ENCODE measurements at regions of chr15 and their contacts with region 1.

Region 1: GRCh38 chr15:75453703-75454470 is 2.4 kb upstream of the SIN3A start:
- DNase-seq: peak; percentile 97 to 99
- ATAC-seq: peak; percentile 43 to 67 (median 51)
- H3K4me3 ChIP-seq: peak overlapping the region; percentile 92
- H3K4me3 Mint-ChIP-seq: peak overlapping the region; percentile 98
- H3K27ac ChIP-seq: peak overlapping the region; percentile 96
- H3K27ac Mint-ChIP-seq: peak overlapping the region; percentile 98 to 99
- H3K4me1 ChIP-seq: peaks cover 38% of the 10 kb centered on the region
- H3K4me1 Mint-ChIP-seq: peaks cover 45 to 49% of the 10 kb centered on the region in 2 donors
- H3K27me3 ChIP-seq: no peaks in the 10 kb centered on the region
- H3K27me3 Mint-ChIP-seq: no peaks in the 10 kb centered on the region
- CTCF ChIP-seq: no peak

Region 2: GRCh38 chr15:74615508-74616365 is 838.1 kb before region 1 on chr15 and contains the start of gene CLK3:
- intact Hi-C with region 1: loop called (anchors 10 kb)
- DNase-seq: peak; percentile 97 to 98
- ATAC-seq: peak; percentile 76 to 88 (median 78)
- H3K4me3 ChIP-seq: peak within 1 kb of the TSS; percentile 89
- H3K4me3 Mint-ChIP-seq: peak within 1 kb of the TSS; percentile 94
- H3K27ac ChIP-seq: peak within 1 kb of the TSS; percentile 97
- H3K27ac Mint-ChIP-seq: peak within 1 kb of the TSS; percentile 94
- H3K4me1 ChIP-seq: peaks cover 46% of the 10 kb centered on the region
- H3K4me1 Mint-ChIP-seq: peaks cover 34 to 55% of the 10 kb centered on the region in 2 donors
- H3K27me3 ChIP-seq: no peaks in the 10 kb centered on the region
- H3K27me3 Mint-ChIP-seq: no peaks in the 10 kb centered on the region
- CTCF ChIP-seq: no peak
- total RNA-seq, gene CLK3: 288 to 298 (median 293) TPM

Region 3: DNA sequence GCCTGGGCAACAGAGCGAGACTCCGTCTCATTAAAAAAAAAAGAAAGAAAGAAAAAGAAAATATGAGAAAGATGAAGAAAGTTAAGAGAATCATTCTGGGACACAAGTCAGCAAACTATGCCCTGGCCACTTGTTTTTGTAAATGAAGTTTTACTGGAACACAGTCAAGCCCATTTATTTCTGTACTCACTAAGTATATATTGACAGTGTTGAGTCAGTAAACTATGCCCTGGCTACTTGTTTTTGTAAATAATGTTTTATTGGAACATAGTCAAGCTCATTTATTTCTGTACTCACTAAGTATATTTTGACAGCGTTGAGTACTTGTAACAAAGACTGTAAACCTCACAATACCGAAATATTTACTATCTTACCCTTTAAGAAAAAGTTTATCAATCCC is 39.8 kb after region 1 on chr15:
- intact Hi-C with region 1: no loop called
- DNase-seq: no peak
- ATAC-seq: no peak
- H3K4me3 ChIP-seq: no peak overlapping the region
- H3K4me3 Mint-ChIP-seq: no peak overlapping the region
- H3K27ac ChIP-seq: no peak overlapping the region
- H3K27ac Mint-ChIP-seq: no peak overlapping the region
- H3K4me1 ChIP-seq: no peaks in the 10 kb centered on the region
- H3K4me1 Mint-ChIP-seq: no peaks in the 10 kb centered on the region
- H3K27me3 ChIP-seq: no peaks in the 10 kb centered on the region
- H3K27me3 Mint-ChIP-seq: no peaks in the 10 kb centered on the region
- CTCF ChIP-seq: no peak

Region 4: GRCh38 chr15:75532413-75533147 is 78.7 kb after region 1 on chr15:
- intact Hi-C with region 1: no loop called
- DNase-seq: peak in 1 of 2 donors; percentile 26
- ATAC-seq: no peak
- H3K4me3 ChIP-seq: no peak overlapping the region
- H3K4me3 Mint-ChIP-seq: no peak overlapping the region
- H3K27ac ChIP-seq: no peak overlapping the region
- H3K27ac Mint-ChIP-seq: peak overlapping the region; percentile 45 to 46
- H3K4me1 ChIP-seq: no peaks in the 10 kb centered on the region
- H3K4me1 Mint-ChIP-seq: peaks cover 18 to 27% of the 10 kb centered on the region in 2 donors
- H3K27me3 ChIP-seq: no peaks in the 10 kb centered on the region
- H3K27me3 Mint-ChIP-seq: no peaks in the 10 kb centered on the region
- CTCF ChIP-seq: no peak

Region 5: DNA sequence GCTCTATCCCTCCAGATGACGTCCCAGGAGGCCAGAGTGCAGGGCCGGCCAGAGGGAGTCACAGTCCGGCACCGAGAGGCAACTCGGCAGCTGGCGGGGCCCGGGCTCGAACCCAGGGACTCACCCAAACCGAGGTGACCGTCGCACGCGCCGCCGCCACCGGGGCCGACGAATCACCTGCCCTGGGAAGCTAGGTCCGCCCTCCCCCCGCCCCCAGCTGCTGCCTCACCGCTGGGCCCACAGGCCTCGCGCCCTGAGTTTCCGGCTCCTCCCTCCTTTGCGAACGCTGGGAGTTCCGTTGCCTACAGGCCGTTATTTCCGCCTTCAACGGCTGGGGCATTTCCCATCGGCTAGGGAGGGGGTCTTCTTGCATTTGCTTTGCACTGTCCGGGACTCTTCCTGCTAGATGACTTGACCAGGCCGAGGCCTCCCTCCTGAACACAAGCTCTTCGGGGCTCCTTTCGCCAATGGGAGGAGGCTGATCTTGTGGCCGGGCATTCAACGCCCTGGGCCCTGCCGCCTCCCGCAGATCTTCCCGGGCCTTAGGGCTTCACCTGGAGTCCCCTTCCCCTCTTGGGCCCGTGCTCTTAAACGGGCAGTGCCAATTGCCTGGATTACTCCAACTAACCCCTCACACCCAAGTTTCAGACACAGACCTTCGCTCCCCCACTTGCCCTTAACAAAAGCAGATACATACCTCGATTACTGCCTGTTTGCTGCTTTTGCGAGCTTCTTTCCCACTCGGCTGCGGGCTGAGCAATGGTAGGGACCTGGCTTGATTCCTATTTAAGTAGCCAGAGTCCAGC is 171.9 kb after region 1 on chr15 and contains the start of gene SNUPN:
- intact Hi-C with region 1: loop called (anchors 1 kb)
- DNase-seq: peak; percentile 85 to 97
- ATAC-seq: peak; percentile 93 to 98 (median 95)
- H3K4me3 ChIP-seq: peak within 1 kb of the TSS; percentile 100
- H3K4me3 Mint-ChIP-seq: peak within 1 kb of the TSS; percentile 90
- H3K27ac ChIP-seq: peak within 1 kb of the TSS; percentile 93
- H3K27ac Mint-ChIP-seq: peak within 1 kb of the TSS; percentile 98 to 99
- H3K4me1 ChIP-seq: peaks cover 13% of the 10 kb centered on the region
- H3K4me1 Mint-ChIP-seq: peaks cover 19 to 21% of the 10 kb centered on the region in 2 donors
- H3K27me3 ChIP-seq: no peaks in the 10 kb centered on the region
- H3K27me3 Mint-ChIP-seq: no peaks in the 10 kb centered on the region
- CTCF ChIP-seq: no peak
- total RNA-seq, gene SNUPN: 13.8 to 20.7 (median 14.8) TPM

Measured in natural killer cell (primary cell).